ENCODE measurements at regions of chr9 and their contacts with region 1.

Region 1: GRCh38 chr9:6498982-6499381 is 86.0 kb downstream of the UHRF2 start:
- DNase-seq: no peak
- H3K4me3 ChIP-seq: no peak overlapping the region
- H3K27ac ChIP-seq: peak overlapping the region in 21 of 59 donors; percentile 3 to 67 (median 28)
- H3K27me3 ChIP-seq: no peaks in the 10 kb centered on the region
- CTCF ChIP-seq: no peak

Region 2: GRCh38 chr9:6449645-6450044 is 49.3 kb before region 1 on chr9:
- intact Hi-C with region 1: no loop called
- DNase-seq: no peak
- H3K4me3 ChIP-seq: no peak overlapping the region
- H3K27ac ChIP-seq: peak overlapping the region in 1 of 59 donors; percentile 43
- H3K27me3 ChIP-seq: no peaks in the 10 kb centered on the region
- CTCF ChIP-seq: no peak

Region 3: DNA sequence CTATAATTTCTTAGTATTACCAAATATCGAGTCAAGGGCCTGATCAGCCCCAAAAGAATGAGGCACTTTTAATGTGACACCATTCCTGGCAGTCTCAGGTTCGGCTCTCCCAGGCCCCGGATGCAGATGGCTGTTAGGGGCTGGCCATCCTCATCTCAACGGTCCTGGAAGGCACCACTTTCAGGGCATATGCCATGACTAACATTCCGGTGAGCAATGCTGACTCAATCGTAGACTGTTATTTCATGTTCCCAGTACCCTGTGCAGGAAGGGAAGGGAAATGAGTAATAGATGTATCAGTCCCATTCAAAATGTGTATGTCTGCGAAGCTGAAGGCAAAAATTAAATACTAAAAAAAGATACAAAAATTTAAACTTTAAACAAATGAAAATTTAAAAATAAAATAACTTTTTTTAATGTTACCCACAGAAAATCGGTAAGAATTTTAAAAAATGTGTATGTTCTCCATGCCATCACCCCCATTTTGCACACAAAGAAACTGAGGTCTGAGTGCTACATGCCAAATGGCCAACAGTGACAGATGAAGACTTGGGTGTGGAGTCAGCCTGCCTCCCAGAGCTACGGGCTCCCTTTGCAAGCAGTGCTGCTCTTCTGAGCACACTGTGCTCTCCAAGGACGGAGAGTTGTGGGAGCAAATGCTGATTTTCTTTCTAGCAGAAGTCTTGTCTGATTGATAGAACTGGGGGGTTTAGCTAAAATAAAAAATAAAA is 67.6 kb after region 1 on chr9:
- intact Hi-C with region 1: loop called in 1 of 2 experiments (anchors 5 kb)
- DNase-seq: peak in 3 of 10 donors; percentile 26 to 57 (median 40)
- H3K4me3 ChIP-seq: peak overlapping the region in 23 of 59 donors; percentile 2 to 46 (median 17)
- H3K27ac ChIP-seq: peak overlapping the region in 57 of 59 donors; percentile 9 to 91 (median 77)
- H3K27me3 ChIP-seq: no peaks in the 10 kb centered on the region
- CTCF ChIP-seq: peak in 4 of 56 donors; percentile 5 to 20 (median 12)